ENCODE measurements at regions of chr6 and their contacts with region 1.

Region 1: GRCh38 chr6:106216527-106216926 is 109.0 kb downstream of the ATG5 start:
- DNase-seq: no peak
- ATAC-seq: no peak
- H3K4me3 ChIP-seq: no peak overlapping the region
- H3K4me3 Mint-ChIP-seq: no peak overlapping the region
- H3K27ac ChIP-seq: no peak overlapping the region
- H3K27ac Mint-ChIP-seq: no peak overlapping the region
- H3K4me1 ChIP-seq: no peaks in the 10 kb centered on the region
- H3K4me1 Mint-ChIP-seq: peaks cover 5 to 28% (median 19%) of the 10 kb centered on the region in 7 donors
- H3K27me3 ChIP-seq: no peaks in the 10 kb centered on the region
- H3K27me3 Mint-ChIP-seq: no peaks in the 10 kb centered on the region

Region 2: GRCh38 chr6:106173124-106173879 is 43.2 kb before region 1 on chr6:
- CTCF ChIA-PET with region 1: no interaction called
- POLR2A ChIA-PET with region 1: no interaction called
- intact Hi-C with region 1: loop called in 1 of 2 experiments (anchors 5 kb)
- DNase-seq: peak in 5 of 9 donors; percentile 15 to 33 (median 32)
- ATAC-seq: peak; percentile 45
- H3K4me3 ChIP-seq: no peak overlapping the region
- H3K4me3 Mint-ChIP-seq: peak overlapping the region in 7 of 10 donors; percentile 30 to 76 (median 54)
- H3K27ac ChIP-seq: no peak overlapping the region
- H3K27ac Mint-ChIP-seq: peak overlapping the region; percentile 6 to 94 (median 74)
- H3K4me1 ChIP-seq: peaks cover 0 to 9% of the 10 kb centered on the region in 2 donors
- H3K4me1 Mint-ChIP-seq: peaks cover 14 to 41% (median 20%) of the 10 kb centered on the region in 7 donors
- H3K27me3 ChIP-seq: no peaks in the 10 kb centered on the region
- H3K27me3 Mint-ChIP-seq: no peaks in the 10 kb centered on the region

Region 3: GRCh38 chr6:106377061-106377540 is 160.6 kb after region 1 on chr6:
- CTCF ChIA-PET with region 1: no interaction called
- POLR2A ChIA-PET with region 1: no interaction called
- intact Hi-C with region 1: no loop called
- DNase-seq: no peak
- ATAC-seq: no peak
- H3K4me3 ChIP-seq: no peak overlapping the region
- H3K4me3 Mint-ChIP-seq: no peak overlapping the region
- H3K27ac ChIP-seq: no peak overlapping the region
- H3K27ac Mint-ChIP-seq: no peak overlapping the region
- H3K4me1 ChIP-seq: no peaks in the 10 kb centered on the region
- H3K4me1 Mint-ChIP-seq: peaks cover 0 to 23% (median 5%) of the 10 kb centered on the region in 7 donors
- H3K27me3 ChIP-seq: peaks cover 0 to 4% of the 10 kb centered on the region in 2 donors
- H3K27me3 Mint-ChIP-seq: peaks cover 0 to 24% (median 8%) of the 10 kb centered on the region in 5 donors